Heart right ventricle (tissue), 16 donors: ENCODE measurements at regions of chr20 and their contacts with region 1.

Region 1: DNA sequence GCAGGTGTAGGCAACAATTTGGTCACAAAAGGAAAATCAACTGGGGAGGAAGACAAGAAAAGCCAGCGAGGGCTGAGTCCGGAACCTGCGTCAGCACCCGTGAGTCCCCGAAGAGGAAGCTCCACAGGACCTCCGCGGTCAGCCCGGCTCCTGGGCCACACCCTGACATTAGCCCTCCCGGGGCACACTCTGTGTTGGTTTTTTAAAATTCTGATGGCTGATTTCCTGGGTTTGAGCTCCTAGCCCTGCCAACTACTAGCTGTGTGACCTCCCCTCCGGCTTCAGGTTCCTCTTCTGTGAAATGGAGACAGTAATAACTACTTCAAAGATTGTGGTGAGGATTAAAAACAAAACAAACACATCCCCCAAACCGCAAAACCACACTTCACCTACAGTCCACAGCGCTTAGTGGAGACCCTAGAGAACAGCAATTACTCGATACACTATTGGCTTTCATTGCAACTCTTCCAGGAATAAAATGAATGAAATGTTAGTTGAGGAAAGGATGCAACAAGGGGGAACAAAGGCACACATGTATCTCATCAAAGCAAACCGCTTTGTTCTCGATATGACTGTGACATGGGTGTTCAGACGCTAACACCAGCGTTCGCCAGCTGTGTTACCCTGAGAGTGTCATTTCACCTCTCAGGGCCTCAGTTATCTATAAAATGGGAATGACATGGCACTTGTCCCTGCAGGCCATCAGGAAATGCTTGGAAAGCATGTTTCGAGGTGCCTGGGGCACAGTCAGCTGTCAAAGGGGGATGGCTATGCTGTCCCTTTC is 983 bp downstream of the ZBP1 start:
- DNase-seq: no peak
- ATAC-seq: peak in 7 of 8 donors; percentile 55 to 87 (median 74)
- H3K4me3 ChIP-seq: peak overlapping the region in 3 of 10 donors; percentile 1 to 48 (median 5)
- H3K27ac ChIP-seq: peak overlapping the region in 4 of 10 donors; percentile 19 to 88 (median 62)
- H3K4me1 ChIP-seq: peaks cover 0 to 43% (median 0%) of the 10 kb centered on the region in 9 donors
- H3K27me3 ChIP-seq: peaks cover 0 to 38% (median 7%) of the 10 kb centered on the region in 7 donors
- CTCF ChIP-seq: no peak

Region 2: GRCh38 chr20:57661199-57662027 is 42.2 kb after region 1 on chr20:
- intact Hi-C with region 1: no loop called
- DNase-seq: no peak
- ATAC-seq: no peak
- H3K4me3 ChIP-seq: no peak overlapping the region
- H3K27ac ChIP-seq: no peak overlapping the region
- H3K4me1 ChIP-seq: peaks cover 0 to 35% (median 9%) of the 10 kb centered on the region in 9 donors
- H3K27me3 ChIP-seq: no peaks in the 10 kb centered on the region
- CTCF ChIP-seq: no peak

Region 3: GRCh38 chr20:58179432-58180099 is 560.3 kb after region 1 on chr20:
- intact Hi-C with region 1: loop called in 1 of 10 experiments (anchors 10 kb)
- DNase-seq: peak; percentile 16 to 72
- ATAC-seq: peak; percentile 65 to 83 (median 78)
- H3K4me3 ChIP-seq: peak overlapping the region in 8 of 10 donors; percentile 21 to 48 (median 32)
- H3K27ac ChIP-seq: no peak overlapping the region
- H3K4me1 ChIP-seq: peaks cover 0 to 26% (median 12%) of the 10 kb centered on the region in 9 donors
- H3K27me3 ChIP-seq: peaks cover 0 to 36% (median 16%) of the 10 kb centered on the region in 7 donors
- CTCF ChIP-seq: peak; percentile 94 to 100 (median 99)